ENCODE measurements at regions of chr1 and their contacts with region 1.

Region 1: GRCh38 chr1:235971571-235972310 is 93.1 kb downstream of the NID1 start:
- DNase-seq: peak; percentile 90
- H3K4me3 Mint-ChIP-seq: peak overlapping the region; percentile 47
- H3K27ac Mint-ChIP-seq: peak overlapping the region; percentile 68
- H3K4me1 Mint-ChIP-seq: peaks cover 16% of the 10 kb centered on the region
- H3K27me3 Mint-ChIP-seq: peaks cover 17% of the 10 kb centered on the region

Region 2: DNA sequence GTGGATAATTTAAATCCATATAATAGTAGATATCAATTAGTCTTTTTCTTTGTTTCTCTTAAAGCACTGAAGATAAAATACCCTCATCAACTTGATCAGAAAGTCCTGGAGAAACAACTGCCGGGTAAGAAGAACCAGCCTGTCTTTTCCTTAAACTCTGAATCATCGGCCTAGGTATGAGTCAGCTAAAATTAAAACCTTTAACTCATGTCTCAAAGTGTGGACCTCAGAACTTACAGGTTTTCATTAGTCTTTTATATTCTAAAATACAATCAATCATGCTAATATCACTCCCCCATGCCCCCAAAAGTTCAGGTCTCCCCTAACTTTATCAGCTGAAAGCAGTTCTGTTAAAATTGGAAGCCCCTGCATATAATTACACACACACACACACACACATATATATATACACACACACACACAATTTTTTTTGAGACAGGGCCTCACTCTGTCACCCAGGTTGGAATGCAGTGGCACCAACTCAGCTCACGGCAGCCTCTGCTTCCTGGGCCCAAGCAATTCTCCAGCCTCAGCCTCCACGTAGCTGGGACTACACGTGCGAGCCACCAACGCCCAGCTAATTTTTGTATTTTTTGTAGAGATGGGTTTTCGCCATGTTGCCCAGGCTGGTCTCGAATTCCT is 528.8 kb before region 1 on chr1:
- CTCF ChIA-PET with region 1: no interaction called
- POLR2A ChIA-PET with region 1: no interaction called
- DNase-seq: no peak
- H3K4me3 Mint-ChIP-seq: no peak overlapping the region
- H3K27ac Mint-ChIP-seq: no peak overlapping the region
- H3K4me1 Mint-ChIP-seq: peaks cover 6% of the 10 kb centered on the region
- H3K27me3 Mint-ChIP-seq: no peaks in the 10 kb centered on the region

Region 3: GRCh38 chr1:235513495-235514366 is 458.0 kb before region 1 on chr1:
- CTCF ChIA-PET with region 1: interaction called, 13 read pairs
- POLR2A ChIA-PET with region 1: no interaction called
- DNase-seq: no peak
- H3K4me3 Mint-ChIP-seq: no peak overlapping the region
- H3K27ac Mint-ChIP-seq: no peak overlapping the region
- H3K4me1 Mint-ChIP-seq: no peaks in the 10 kb centered on the region
- H3K27me3 Mint-ChIP-seq: peaks cover 16% of the 10 kb centered on the region

Region 4: DNA sequence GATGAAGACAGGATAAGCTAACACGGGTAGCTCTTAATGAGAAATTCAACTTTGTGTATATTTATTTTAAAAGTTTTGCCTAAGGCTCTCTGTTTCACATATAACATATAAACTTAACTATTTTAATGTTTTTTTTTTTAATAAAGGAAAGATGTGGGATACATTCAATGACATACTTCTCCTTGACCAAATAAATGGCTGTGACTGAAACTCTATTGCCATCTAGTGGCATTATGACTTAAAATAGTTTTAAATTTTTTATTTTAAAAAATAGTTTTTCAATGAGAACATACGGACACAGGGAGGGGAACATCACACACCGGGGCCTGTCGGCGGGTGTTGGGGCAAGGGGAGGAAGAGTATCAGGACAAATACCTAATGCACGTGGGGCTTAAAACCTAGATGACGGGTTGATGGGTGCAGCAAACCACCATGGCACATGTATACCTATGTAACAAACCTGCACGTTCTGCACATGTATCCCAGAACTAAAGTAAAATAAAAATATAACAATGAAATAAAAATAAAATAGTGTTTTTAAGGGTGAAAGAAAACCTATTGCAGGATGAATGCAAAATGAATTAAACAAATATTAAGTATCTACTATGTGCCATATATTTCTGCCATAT is 188.5 kb before region 1 on chr1:
- CTCF ChIA-PET with region 1: interaction called, 26 read pairs
- POLR2A ChIA-PET with region 1: interaction called, 7 read pairs
- DNase-seq: no peak
- H3K4me3 Mint-ChIP-seq: no peak overlapping the region
- H3K27ac Mint-ChIP-seq: no peak overlapping the region
- H3K4me1 Mint-ChIP-seq: no peaks in the 10 kb centered on the region
- H3K27me3 Mint-ChIP-seq: no peaks in the 10 kb centered on the region

Region 5: DNA sequence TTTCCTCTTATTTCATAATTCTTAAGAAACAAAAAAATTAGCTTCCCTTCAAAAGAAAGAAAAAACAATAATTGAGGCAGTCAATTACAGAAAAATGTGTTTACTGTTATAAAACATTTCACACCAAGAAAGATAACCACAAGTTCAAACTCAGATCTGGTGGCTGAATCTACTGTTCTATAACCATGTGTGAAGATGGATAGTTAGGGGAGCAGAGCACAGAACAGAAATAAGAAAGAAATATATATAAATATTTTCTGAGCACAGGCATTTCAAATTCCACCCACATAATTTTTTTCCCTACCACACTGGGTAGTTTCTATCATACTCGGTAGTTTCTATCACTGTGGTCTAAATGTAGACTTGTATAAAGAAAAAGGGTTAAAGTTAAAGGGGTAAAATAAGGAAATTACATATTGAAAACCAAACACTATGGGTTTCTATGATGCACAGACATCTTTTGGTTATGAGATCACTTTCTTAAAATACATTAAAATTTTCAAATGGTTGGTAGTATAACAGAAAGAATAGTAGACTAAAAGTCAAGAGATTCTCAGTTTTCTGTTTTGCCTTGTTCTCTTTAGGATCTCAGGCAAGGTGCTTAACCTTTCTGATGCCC is 115.8 kb before region 1 on chr1:
- CTCF ChIA-PET with region 1: interaction called, 12 read pairs
- POLR2A ChIA-PET with region 1: no interaction called
- DNase-seq: no peak
- H3K4me3 Mint-ChIP-seq: no peak overlapping the region
- H3K27ac Mint-ChIP-seq: no peak overlapping the region
- H3K4me1 Mint-ChIP-seq: peaks cover 21% of the 10 kb centered on the region
- H3K27me3 Mint-ChIP-seq: no peaks in the 10 kb centered on the region

Region 6: DNA sequence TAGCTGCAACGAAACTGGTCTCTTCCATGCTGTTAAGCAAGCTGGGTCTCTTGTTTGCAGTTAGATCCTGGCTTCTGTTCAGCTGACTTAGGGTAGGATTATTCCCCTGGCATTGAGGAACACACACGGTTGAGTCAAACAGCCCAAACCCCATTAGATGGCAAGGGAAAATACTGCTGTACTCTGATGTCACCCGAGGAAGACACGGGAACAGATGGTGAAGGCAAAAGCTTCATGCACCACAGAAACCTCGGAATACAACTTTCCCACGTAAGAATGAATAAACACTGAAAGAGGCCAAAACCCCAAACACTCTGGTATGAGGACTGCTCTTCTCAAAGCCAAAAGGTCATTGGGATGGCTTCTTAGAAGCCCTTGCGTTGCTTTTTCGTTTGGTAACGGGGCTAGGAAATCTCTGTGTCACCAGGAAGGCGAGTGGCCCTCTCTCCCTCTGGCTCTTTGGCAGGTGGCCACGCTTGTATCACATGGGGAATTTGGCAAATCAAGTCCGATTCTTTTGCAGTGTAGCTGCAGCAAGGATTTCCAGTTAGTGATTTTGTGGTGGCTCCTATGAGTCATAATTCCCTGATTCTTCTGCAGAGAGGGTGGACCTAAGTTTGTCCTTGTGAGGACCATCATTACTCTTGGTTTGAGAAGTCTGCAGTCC is 88.3 kb before region 1 on chr1:
- CTCF ChIA-PET with region 1: interaction called, 17 read pairs
- POLR2A ChIA-PET with region 1: interaction called, 4 read pairs
- DNase-seq: no peak
- H3K4me3 Mint-ChIP-seq: peak overlapping the region; percentile 19
- H3K27ac Mint-ChIP-seq: peak overlapping the region; percentile 34
- H3K4me1 Mint-ChIP-seq: peaks cover 64% of the 10 kb centered on the region
- H3K27me3 Mint-ChIP-seq: peaks cover 2% of the 10 kb centered on the region

Region 7: GRCh38 chr1:235999259-235999925 is 27.7 kb after region 1 on chr1:
- CTCF ChIA-PET with region 1: interaction called, 35 read pairs
- POLR2A ChIA-PET with region 1: interaction called, 11 read pairs
- DNase-seq: peak; percentile 77
- H3K4me3 Mint-ChIP-seq: peak overlapping the region; percentile 22
- H3K27ac Mint-ChIP-seq: peak overlapping the region; percentile 92
- H3K4me1 Mint-ChIP-seq: peaks cover 82% of the 10 kb centered on the region
- H3K27me3 Mint-ChIP-seq: no peaks in the 10 kb centered on the region

Measured in activated CD4-positive, alpha-beta memory T cell treated with anti-CD3 and anti-CD28 coated beads, Interleukin-2, amount 10 ng/mL, durations not matched to agents 7 days and 5 days (primary cell).